K562 (cell line): ENCODE measurements at regions of chr3 and their contacts with region 1.

Region 1: DNA sequence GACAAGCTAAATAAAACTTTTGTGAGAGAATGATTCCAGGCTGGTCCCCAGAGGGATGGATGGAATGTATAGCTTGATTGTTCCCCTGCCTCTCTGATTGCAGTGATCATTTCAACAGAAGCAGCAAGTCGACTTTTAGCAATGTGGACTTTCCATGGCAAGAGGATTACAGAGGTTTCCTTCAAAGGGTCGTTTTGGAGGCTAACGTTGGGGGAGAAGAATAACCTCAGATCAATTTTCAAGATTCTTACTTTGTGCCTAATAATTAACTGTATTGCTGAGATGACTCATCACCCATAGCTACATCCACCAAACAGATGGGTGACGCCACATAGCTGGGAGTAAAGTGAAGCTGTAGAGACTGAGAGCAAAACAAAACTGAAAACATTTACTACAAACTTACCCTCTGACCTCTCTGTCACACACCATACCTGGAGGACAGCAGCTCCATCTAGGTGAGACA is 79.9 kb downstream of the GTPBP8 start:
- DNase-seq: no peak
- ATAC-seq: no peak
- H3K4me3 ChIP-seq: no peak overlapping the region
- H3K27ac ChIP-seq: no peak overlapping the region
- H3K4me1 ChIP-seq: no peaks in the 10 kb centered on the region
- H3K27me3 ChIP-seq: no peaks in the 10 kb centered on the region
- CTCF ChIP-seq: no peak
- EP300 ChIP-seq: no peak
- POLR2A ChIP-seq: no peak
- RAD21 ChIP-seq: no peak

Region 2: GRCh38 chr3:113304856-113305540 is 234.3 kb after region 1 on chr3:
- CTCF ChIA-PET with region 1: no interaction called
- POLR2A ChIA-PET with region 1: no interaction called
- in situ Hi-C with region 1: loop called (anchors 10 kb)
- intact Hi-C with region 1: no loop called
- DNase-seq: peak in 2 of 4 experiments; percentile 5 to 16
- ATAC-seq: peak; percentile 42; the same call in 2 of the 3 replicates
- H3K4me3 ChIP-seq: no peak overlapping the region
- H3K27ac ChIP-seq: no peak overlapping the region
- H3K4me1 ChIP-seq: no peaks in the 10 kb centered on the region
- H3K27me3 ChIP-seq: no peaks in the 10 kb centered on the region
- CTCF ChIP-seq: no peak
- EP300 ChIP-seq: no peak
- POLR2A ChIP-seq: no peak
- RAD21 ChIP-seq: no peak